Astrocyte of the cerebellum (primary cell): ENCODE measurements at regions of chr1 and their contacts with region 1.

Region 1: GRCh38 chr1:48039088-48040054 is 42.2 kb upstream of the TRABD2B start:
- DNase-seq: no peak
- H3K4me3 ChIP-seq: no peak overlapping the region
- CTCF ChIP-seq: no peak

Region 2: GRCh38 chr1:48082271-48082962 is 43.0 kb after region 1 on chr1:
- in situ Hi-C with region 1: loop called (anchors 10 kb)
- DNase-seq: no peak
- H3K4me3 ChIP-seq: no peak overlapping the region
- CTCF ChIP-seq: no peak